ENCODE measurements at regions of chrX and their contacts with region 1.

Region 1: GRCh38 chrX:153102436-153102835 is 30.2 kb downstream of the PNMA6A start:
- DNase-seq: no peak
- ATAC-seq: no peak
- H3K4me3 ChIP-seq: no peak overlapping the region
- H3K27ac ChIP-seq: no peak overlapping the region
- H3K4me1 ChIP-seq: no peaks in the 10 kb centered on the region
- H3K27me3 ChIP-seq: no peaks in the 10 kb centered on the region
- CTCF ChIP-seq: no peak
- EP300 ChIP-seq: no peak
- POLR2A ChIP-seq: no peak
- RAD21 ChIP-seq: no peak

Region 2: GRCh38 chrX:153184787-153185186 is 82.4 kb after region 1 on chrX:
- CTCF ChIA-PET with region 1: no interaction called
- POLR2A ChIA-PET with region 1: no interaction called
- RAD21 ChIA-PET with region 1: no interaction called
- SMC1A ChIA-PET with region 1: no interaction called
- in situ Hi-C with region 1: loop called (anchors 10 kb)
- intact Hi-C with region 1: no loop called
- DNase-seq: no peak
- ATAC-seq: no peak
- H3K4me3 ChIP-seq: no peak overlapping the region
- H3K27ac ChIP-seq: no peak overlapping the region
- H3K4me1 ChIP-seq: no peaks in the 10 kb centered on the region
- H3K27me3 ChIP-seq: no peaks in the 10 kb centered on the region
- CTCF ChIP-seq: no peak
- EP300 ChIP-seq: no peak
- POLR2A ChIP-seq: no peak
- RAD21 ChIP-seq: no peak

Region 3: DNA sequence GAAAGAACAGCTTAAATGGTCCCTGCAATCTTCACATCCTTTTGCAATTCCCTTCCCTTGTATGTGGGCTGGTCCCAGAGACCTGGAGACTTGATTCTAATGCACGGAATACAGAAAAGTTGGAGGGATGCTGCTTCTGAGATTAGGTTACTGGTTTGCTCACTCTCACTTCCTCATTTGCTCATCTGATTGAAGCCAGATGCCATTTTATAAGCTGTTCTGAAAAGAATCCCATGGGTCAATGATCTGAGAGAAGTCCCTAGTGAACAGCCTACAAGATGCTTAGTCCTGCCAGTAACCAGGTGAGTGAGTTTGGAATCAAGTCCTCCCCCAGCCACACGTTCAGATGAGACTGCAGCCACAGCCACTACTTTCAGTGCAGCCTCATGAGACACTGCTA is 112.5 kb after region 1 on chrX:
- CTCF ChIA-PET with region 1: no interaction called
- POLR2A ChIA-PET with region 1: no interaction called
- RAD21 ChIA-PET with region 1: no interaction called
- SMC1A ChIA-PET with region 1: no interaction called
- in situ Hi-C with region 1: loop called (anchors 10 kb)
- intact Hi-C with region 1: no loop called
- DNase-seq: peak; percentile 3
- ATAC-seq: peak; percentile 80
- H3K4me3 ChIP-seq: no peak overlapping the region
- H3K27ac ChIP-seq: no peak overlapping the region
- H3K4me1 ChIP-seq: 0 out of 2 replicates have a peak, but pooled peaks cover 3% of the 10 kb centered on the region
- H3K27me3 ChIP-seq: no peaks in the 10 kb centered on the region
- CTCF ChIP-seq: no peak
- EP300 ChIP-seq: no peak
- POLR2A ChIP-seq: no peak
- RAD21 ChIP-seq: no peak

Region 4: GRCh38 chrX:153744214-153744724 is 641.8 kb after region 1 on chrX:
- CTCF ChIA-PET with region 1: no interaction called
- POLR2A ChIA-PET with region 1: no interaction called
- RAD21 ChIA-PET with region 1: no interaction called
- SMC1A ChIA-PET with region 1: no interaction called
- in situ Hi-C with region 1: no loop called
- intact Hi-C with region 1: no loop called
- DNase-seq: no peak
- ATAC-seq: no peak
- H3K4me3 ChIP-seq: no peak overlapping the region
- H3K27ac ChIP-seq: no peak overlapping the region
- H3K4me1 ChIP-seq: no peaks in the 10 kb centered on the region
- H3K27me3 ChIP-seq: no peaks in the 10 kb centered on the region; a peak in 1 of 4 replicates
- CTCF ChIP-seq: peak in 2 of 3 experiments; percentile 14 to 38; a peak in 1 of 6 replicates
- EP300 ChIP-seq: no peak
- POLR2A ChIP-seq: no peak
- RAD21 ChIP-seq: no peak